Calu3 (cell line): ENCODE measurements at regions of chr19 and their contacts with region 1.

Region 1: GRCh38 chr19:12985049-12985776 is 10.1 kb upstream of the NFIX start:
- DNase-seq: peak; percentile 82
- H3K4me3 Mint-ChIP-seq: peak overlapping the region; percentile 28
- H3K27ac Mint-ChIP-seq: peak overlapping the region; percentile 11
- H3K4me1 Mint-ChIP-seq: no peaks in the 10 kb centered on the region
- H3K27me3 Mint-ChIP-seq: no peaks in the 10 kb centered on the region
- CTCF ChIP-seq: no peak

Region 2: DNA sequence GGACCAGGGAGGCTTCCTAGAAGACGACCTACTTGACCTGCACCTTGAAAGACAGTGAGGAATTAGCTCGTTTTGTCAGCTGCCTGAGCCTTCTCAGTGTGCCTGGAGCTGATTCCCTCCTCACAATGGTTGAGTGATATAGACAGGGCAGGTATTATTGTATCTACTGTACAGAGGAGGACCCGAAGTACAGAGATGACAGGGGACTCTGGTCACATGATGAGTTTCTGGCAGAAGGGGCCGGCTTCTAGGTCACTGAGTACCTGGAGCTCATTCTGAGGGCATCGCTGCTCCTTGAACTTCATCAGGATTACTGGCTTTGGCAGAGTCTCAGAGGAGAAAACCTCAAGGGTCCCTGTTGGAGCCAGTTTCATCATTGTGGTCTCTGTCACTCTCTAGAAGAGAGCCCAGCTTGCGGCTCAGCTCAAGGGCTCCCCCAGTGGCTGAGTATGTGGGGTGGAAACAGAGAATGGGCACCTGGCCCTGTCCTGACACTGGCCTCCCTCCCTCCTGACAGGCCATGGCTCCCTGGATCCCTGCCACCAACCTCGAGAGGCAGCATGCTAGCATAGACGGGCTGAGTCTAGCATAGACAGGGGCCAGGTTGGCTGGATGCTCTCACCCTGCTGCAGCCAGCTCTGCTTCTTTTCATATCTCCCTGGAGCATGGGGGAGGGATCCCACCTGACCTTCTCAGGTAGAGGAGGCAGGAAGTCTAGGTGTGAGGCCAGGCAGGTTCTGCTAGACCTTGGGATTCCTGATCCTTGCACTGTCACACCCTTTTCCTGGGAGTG is 48.8 kb after region 1 on chr19:
- CTCF ChIA-PET with region 1: interaction called, 7 read pairs
- intact Hi-C with region 1: loop called (anchors 5 kb)
- DNase-seq: peak; percentile 75
- H3K4me3 Mint-ChIP-seq: no peak overlapping the region
- H3K27ac Mint-ChIP-seq: no peak overlapping the region
- H3K4me1 Mint-ChIP-seq: peaks cover 51% of the 10 kb centered on the region
- H3K27me3 Mint-ChIP-seq: no peaks in the 10 kb centered on the region
- CTCF ChIP-seq: peak; percentile 57